ENCODE measurements at regions of chr4 and their contacts with region 1.

Region 1: GRCh38 chr4:112636688-112637551 is at the starts of genes LARP7 and ZGRF1:
- DNase-seq: peak; percentile 91 to 99 (median 99)
- ATAC-seq: peak; percentile 91
- H3K4me3 ChIP-seq: peak within 1 kb of the TSS; percentile 98
- H3K4me3 Mint-ChIP-seq: peak within 1 kb of the TSS in 2 of 10 donors; percentile 26 to 46
- H3K27ac ChIP-seq: peak within 1 kb of the TSS; percentile 88
- H3K27ac Mint-ChIP-seq: peak within 1 kb of the TSS in 1 of 9 donors; percentile 66
- H3K4me1 ChIP-seq: peaks cover 9 to 17% of the 10 kb centered on the region in 2 donors
- H3K4me1 Mint-ChIP-seq: peaks cover 19 to 29% (median 21%) of the 10 kb centered on the region in 7 donors
- H3K27me3 ChIP-seq: no peaks in the 10 kb centered on the region
- H3K27me3 Mint-ChIP-seq: no peaks in the 10 kb centered on the region
- total RNA-seq, gene LARP7: 28.6 to 48.2 (median 47.7) TPM
- total RNA-seq, gene ZGRF1: 8.1 to 29.8 (median 10.5) TPM

Region 2: DNA sequence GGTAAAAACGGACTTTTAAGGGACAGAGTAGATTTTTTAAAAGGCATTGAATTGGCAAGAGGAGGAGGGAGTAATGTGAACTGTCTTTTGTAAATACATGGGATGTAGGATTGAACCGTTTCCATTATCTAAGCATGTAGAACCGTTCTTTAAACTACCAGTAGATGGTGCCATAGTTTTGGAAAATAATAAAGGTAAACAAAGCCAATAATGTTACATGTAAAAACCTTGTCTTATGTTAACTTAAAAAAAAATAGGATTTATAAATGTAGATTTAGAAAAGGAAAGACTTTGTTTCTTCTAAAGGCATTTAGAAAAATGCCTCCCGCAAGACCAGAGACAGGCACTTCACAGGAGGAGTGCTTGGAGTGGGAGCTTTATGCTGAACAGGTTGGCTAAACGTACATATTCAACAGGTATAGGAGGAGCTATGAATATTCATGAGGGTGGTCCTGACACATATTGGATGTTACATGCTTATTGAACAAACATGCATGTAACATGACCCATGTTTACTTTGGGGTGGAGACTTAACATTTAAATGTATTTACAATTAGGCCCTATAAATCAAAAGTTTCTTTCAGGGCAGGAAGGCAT is 537.1 kb before region 1 on chr4:
- CTCF ChIA-PET with region 1: no interaction called
- POLR2A ChIA-PET with region 1: no interaction called
- intact Hi-C with region 1: loop called in 1 of 2 experiments (anchors 10 kb)
- DNase-seq: peak in 7 of 9 donors; percentile 15 to 58 (median 41)
- ATAC-seq: peak; percentile 72
- H3K4me3 ChIP-seq: no peak overlapping the region
- H3K4me3 Mint-ChIP-seq: no peak overlapping the region
- H3K27ac ChIP-seq: no peak overlapping the region
- H3K27ac Mint-ChIP-seq: peak overlapping the region in 1 of 9 donors; percentile 25
- H3K4me1 ChIP-seq: no peaks in the 10 kb centered on the region
- H3K4me1 Mint-ChIP-seq: peaks cover 0 to 13% (median 0%) of the 10 kb centered on the region in 7 donors
- H3K27me3 ChIP-seq: no peaks in the 10 kb centered on the region
- H3K27me3 Mint-ChIP-seq: peaks cover 4 to 29% (median 10%) of the 10 kb centered on the region in 5 donors

Region 3: GRCh38 chr4:112284662-112285411 is 352.1 kb before region 1 on chr4:
- CTCF ChIA-PET with region 1: no interaction called
- POLR2A ChIA-PET with region 1: interaction called, 3 read pairs
- intact Hi-C with region 1: loop called (anchors 1 kb)
- DNase-seq: no peak
- ATAC-seq: no peak
- H3K4me3 ChIP-seq: peak overlapping the region; percentile 94
- H3K4me3 Mint-ChIP-seq: peak overlapping the region; percentile 87 to 97 (median 92)
- H3K27ac ChIP-seq: peak overlapping the region; percentile 81
- H3K27ac Mint-ChIP-seq: peak overlapping the region; percentile 81 to 95 (median 91)
- H3K4me1 ChIP-seq: peaks cover 31 to 54% of the 10 kb centered on the region in 2 donors
- H3K4me1 Mint-ChIP-seq: peaks cover 47 to 88% (median 83%) of the 10 kb centered on the region in 7 donors
- H3K27me3 ChIP-seq: no peaks in the 10 kb centered on the region
- H3K27me3 Mint-ChIP-seq: no peaks in the 10 kb centered on the region

Region 4: GRCh38 chr4:112515304-112516067 is 121.4 kb before region 1 on chr4:
- CTCF ChIA-PET with region 1: no interaction called
- POLR2A ChIA-PET with region 1: no interaction called
- intact Hi-C with region 1: loop called (anchors 2 kb)
- DNase-seq: peak in 5 of 9 donors; percentile 21 to 66 (median 40)
- ATAC-seq: peak; percentile 66
- H3K4me3 ChIP-seq: peak overlapping the region; percentile 63
- H3K4me3 Mint-ChIP-seq: peak overlapping the region; percentile 85 to 99 (median 92)
- H3K27ac ChIP-seq: no peak overlapping the region
- H3K27ac Mint-ChIP-seq: peak overlapping the region in 4 of 9 donors; percentile 38 to 86 (median 66)
- H3K4me1 ChIP-seq: peaks cover 13 to 40% of the 10 kb centered on the region in 2 donors
- H3K4me1 Mint-ChIP-seq: peaks cover 37 to 66% (median 59%) of the 10 kb centered on the region in 7 donors
- H3K27me3 ChIP-seq: peaks cover 17 to 69% of the 10 kb centered on the region in 2 donors
- H3K27me3 Mint-ChIP-seq: peaks cover 91 to 99% (median 93%) of the 10 kb centered on the region in 5 donors

Region 5: DNA sequence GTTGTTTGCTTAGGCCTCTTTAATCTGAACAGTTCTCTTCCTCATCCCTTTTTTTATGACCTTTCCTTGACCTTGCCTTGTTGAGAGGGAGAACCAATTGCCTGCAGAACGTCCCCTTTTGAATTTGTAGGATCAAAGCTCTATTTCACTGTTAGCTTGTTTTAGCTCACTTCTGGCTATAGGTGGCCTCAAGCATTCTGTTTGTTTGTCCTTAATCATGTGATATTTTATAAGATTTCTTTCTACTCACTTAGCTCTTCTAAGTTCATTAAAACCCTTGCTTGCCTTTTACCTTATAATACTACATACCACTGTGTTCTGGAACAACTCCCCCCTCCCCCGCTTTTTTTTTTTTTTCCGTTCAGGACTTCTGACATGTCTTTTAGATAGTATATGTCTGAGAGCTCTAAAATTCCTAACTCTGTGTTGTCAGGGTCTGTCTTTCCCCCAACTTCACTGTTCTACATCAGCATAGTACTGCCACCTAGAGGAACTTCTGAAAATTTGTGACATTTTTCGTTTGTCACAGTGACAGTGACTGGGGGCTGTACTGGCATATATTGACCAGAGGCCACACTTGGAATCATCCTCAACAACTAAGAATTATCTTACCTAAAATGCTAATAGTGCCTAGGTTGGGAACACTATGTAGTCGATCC is 128.5 kb after region 1 on chr4:
- CTCF ChIA-PET with region 1: interaction called, 6 read pairs
- POLR2A ChIA-PET with region 1: no interaction called
- intact Hi-C with region 1: loop called (anchors 1 kb)
- DNase-seq: peak in 1 of 9 donors; percentile 6
- ATAC-seq: no peak
- H3K4me3 ChIP-seq: no peak overlapping the region
- H3K4me3 Mint-ChIP-seq: no peak overlapping the region
- H3K27ac ChIP-seq: no peak overlapping the region
- H3K27ac Mint-ChIP-seq: no peak overlapping the region
- H3K4me1 ChIP-seq: no peaks in the 10 kb centered on the region
- H3K4me1 Mint-ChIP-seq: peaks cover 0 to 4% (median 2%) of the 10 kb centered on the region in 7 donors
- H3K27me3 ChIP-seq: no peaks in the 10 kb centered on the region
- H3K27me3 Mint-ChIP-seq: peaks cover 3 to 9% (median 4%) of the 10 kb centered on the region in 5 donors

Region 6: GRCh38 chr4:112951362-112952312 is 314.7 kb after region 1 on chr4:
- CTCF ChIA-PET with region 1: no interaction called
- POLR2A ChIA-PET with region 1: no interaction called
- intact Hi-C with region 1: loop called (anchors 1 to 5 kb)
- DNase-seq: peak in 1 of 9 donors; percentile 8
- ATAC-seq: no peak
- H3K4me3 ChIP-seq: no peak overlapping the region
- H3K4me3 Mint-ChIP-seq: no peak overlapping the region
- H3K27ac ChIP-seq: no peak overlapping the region
- H3K27ac Mint-ChIP-seq: no peak overlapping the region
- H3K4me1 ChIP-seq: no peaks in the 10 kb centered on the region
- H3K4me1 Mint-ChIP-seq: peaks cover 0 to 2% (median 0%) of the 10 kb centered on the region in 7 donors
- H3K27me3 ChIP-seq: no peaks in the 10 kb centered on the region
- H3K27me3 Mint-ChIP-seq: peaks cover 5 to 29% (median 7%) of the 10 kb centered on the region in 5 donors

Measured in naive thymus-derived CD4-positive, alpha-beta T cell (primary cell).